ENCODE measurements at regions of chr1 and their contacts with region 1.

Region 1: GRCh38 chr1:220776720-220777326 is 9.9 kb upstream of the MTARC1 start:
- DNase-seq: peak; percentile 87
- ATAC-seq: peak; percentile 87
- H3K4me3 Mint-ChIP-seq: no peak overlapping the region
- H3K27ac Mint-ChIP-seq: no peak overlapping the region
- H3K4me1 Mint-ChIP-seq: no peaks in the 10 kb centered on the region
- H3K27me3 Mint-ChIP-seq: peaks cover 11% of the 10 kb centered on the region

Region 2: GRCh38 chr1:220113136-220113695 is 663.6 kb before region 1 on chr1:
- CTCF ChIA-PET with region 1: interaction called, 3 read pairs
- POLR2A ChIA-PET with region 1: no interaction called
- intact Hi-C with region 1: loop called in 1 of 2 experiments (anchors 2 kb)
- DNase-seq: peak; percentile 40
- ATAC-seq: peak; percentile 69
- H3K4me3 Mint-ChIP-seq: no peak overlapping the region
- H3K27ac Mint-ChIP-seq: no peak overlapping the region
- H3K4me1 Mint-ChIP-seq: peaks cover 6% of the 10 kb centered on the region
- H3K27me3 Mint-ChIP-seq: no peaks in the 10 kb centered on the region

Region 3: GRCh38 chr1:220217383-220217988 is 559.3 kb before region 1 on chr1:
- CTCF ChIA-PET with region 1: no interaction called
- POLR2A ChIA-PET with region 1: no interaction called
- intact Hi-C with region 1: loop called in 1 of 2 experiments (anchors 1 kb)
- DNase-seq: no peak
- ATAC-seq: no peak
- H3K4me3 Mint-ChIP-seq: no peak overlapping the region
- H3K27ac Mint-ChIP-seq: no peak overlapping the region
- H3K4me1 Mint-ChIP-seq: peaks cover 26% of the 10 kb centered on the region
- H3K27me3 Mint-ChIP-seq: no peaks in the 10 kb centered on the region

Region 4: GRCh38 chr1:220296981-220297380 is 479.8 kb before region 1 on chr1:
- CTCF ChIA-PET with region 1: no interaction called
- POLR2A ChIA-PET with region 1: no interaction called
- intact Hi-C with region 1: loop called in 1 of 2 experiments (anchors 1 kb)
- DNase-seq: no peak
- ATAC-seq: no peak
- H3K4me3 Mint-ChIP-seq: no peak overlapping the region
- H3K27ac Mint-ChIP-seq: no peak overlapping the region
- H3K4me1 Mint-ChIP-seq: no peaks in the 10 kb centered on the region
- H3K27me3 Mint-ChIP-seq: peaks cover 5% of the 10 kb centered on the region